ENCODE measurements at regions of chr2 and their contacts with region 1.

Region 1: GRCh38 chr2:54723131-54723995 is at the start of gene EML6:
- DNase-seq: peak; percentile 99
- H3K4me3 Mint-ChIP-seq: peak within 1 kb of the TSS; percentile 90
- H3K27ac Mint-ChIP-seq: no peak within 1 kb of the TSS
- H3K4me1 Mint-ChIP-seq: peaks cover 13% of the 10 kb centered on the region
- H3K27me3 Mint-ChIP-seq: peaks cover 32% of the 10 kb centered on the region
- total RNA-seq, gene EML6: 0.38 to 0.49 TPM

Region 2: GRCh38 chr2:54115284-54116137 is 607.9 kb before region 1 on chr2 and contains the start of gene ACYP2:
- CTCF ChIA-PET with region 1: no interaction called
- intact Hi-C with region 1: loop called (anchors 1 kb)
- DNase-seq: peak; percentile 95
- H3K4me3 Mint-ChIP-seq: peak within 1 kb of the TSS; percentile 97
- H3K27ac Mint-ChIP-seq: peak within 1 kb of the TSS; percentile 100
- H3K4me1 Mint-ChIP-seq: peaks cover 11% of the 10 kb centered on the region
- H3K27me3 Mint-ChIP-seq: no peaks in the 10 kb centered on the region
- total RNA-seq, gene ACYP2: 6.8 to 7.3 TPM

Region 3: DNA sequence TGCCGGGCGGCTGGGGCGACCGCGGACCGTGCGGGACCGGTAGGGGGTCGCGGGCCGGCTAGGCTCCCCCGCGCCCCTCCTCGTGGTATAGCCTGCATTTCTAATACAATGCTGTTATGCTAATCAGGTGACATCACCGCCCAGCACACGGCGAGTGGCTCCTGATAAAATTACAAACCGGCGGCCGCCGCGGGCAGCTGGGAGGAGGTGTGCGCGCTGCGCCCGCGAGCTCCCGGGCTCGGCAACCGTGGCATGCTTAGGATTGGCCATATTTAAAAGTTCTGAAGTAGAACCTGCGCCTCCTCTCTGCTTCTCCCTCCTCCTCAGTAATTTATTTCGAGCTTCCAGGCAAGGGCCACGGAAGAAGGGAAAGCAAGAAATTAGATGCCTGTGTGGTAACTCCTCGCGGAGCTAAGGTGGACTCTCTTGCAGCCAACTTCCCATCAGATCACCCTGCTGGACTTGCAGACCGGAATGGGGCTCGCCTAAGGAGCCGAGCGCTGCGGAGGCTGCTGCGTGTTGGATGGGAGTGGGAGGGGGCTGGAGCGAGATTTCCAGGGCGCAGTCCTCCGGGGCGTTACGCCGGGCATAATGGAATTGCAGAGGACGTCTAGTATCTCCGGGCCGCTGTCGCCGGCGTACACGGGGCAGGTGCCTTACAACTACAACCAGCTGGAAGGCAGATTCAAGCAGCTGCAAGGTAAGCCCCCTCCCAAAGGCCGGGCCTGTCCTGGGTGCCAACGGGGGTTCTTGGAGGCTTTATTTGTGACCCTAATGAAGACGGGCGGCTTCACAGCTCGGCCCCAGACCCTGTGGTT is 165.0 kb before region 1 on chr2:
- CTCF ChIA-PET with region 1: interaction called, 3 read pairs
- intact Hi-C with region 1: loop called (anchors 1 kb)
- DNase-seq: peak; percentile 83
- H3K4me3 Mint-ChIP-seq: peak overlapping the region; percentile 87
- H3K27ac Mint-ChIP-seq: peak overlapping the region; percentile 99
- H3K4me1 Mint-ChIP-seq: peaks cover 43% of the 10 kb centered on the region
- H3K27me3 Mint-ChIP-seq: no peaks in the 10 kb centered on the region

Region 4: DNA sequence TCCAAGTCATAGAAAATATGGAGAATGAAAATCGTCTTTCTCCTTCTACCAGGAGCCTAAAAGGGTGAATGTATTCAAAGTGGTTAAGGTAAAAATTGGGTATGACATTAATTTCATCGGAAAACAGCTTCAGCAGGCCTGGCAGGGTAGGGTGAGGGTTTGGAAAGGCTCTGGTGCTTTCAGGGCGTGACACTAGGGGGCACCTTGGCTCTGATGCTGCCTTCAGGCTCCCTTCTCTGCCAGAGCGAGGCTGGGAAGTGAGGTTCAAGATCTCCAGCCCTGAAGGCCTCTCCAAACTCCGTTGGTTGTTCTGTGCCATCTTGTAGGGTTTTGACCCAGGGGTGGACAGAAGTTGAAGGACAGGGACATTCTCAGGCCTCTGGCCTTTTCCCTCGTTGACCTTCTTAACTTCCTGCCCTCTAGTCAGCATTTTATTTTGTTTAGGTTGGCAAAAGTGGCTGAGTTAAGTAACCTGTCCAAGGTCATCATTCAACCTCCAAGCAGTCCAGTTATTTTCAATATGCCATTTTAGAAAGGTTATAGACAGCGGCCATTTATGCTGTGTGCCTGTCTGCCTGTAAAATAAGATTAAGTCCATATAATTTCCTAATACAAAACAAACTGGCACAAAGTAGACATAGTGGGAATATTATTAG is 40.4 kb after region 1 on chr2:
- CTCF ChIA-PET with region 1: no interaction called
- intact Hi-C with region 1: loop called (anchors 1 kb)
- DNase-seq: peak; percentile 53
- H3K4me3 Mint-ChIP-seq: no peak overlapping the region
- H3K27ac Mint-ChIP-seq: no peak overlapping the region
- H3K4me1 Mint-ChIP-seq: peaks cover 12% of the 10 kb centered on the region
- H3K27me3 Mint-ChIP-seq: no peaks in the 10 kb centered on the region

Region 5: DNA sequence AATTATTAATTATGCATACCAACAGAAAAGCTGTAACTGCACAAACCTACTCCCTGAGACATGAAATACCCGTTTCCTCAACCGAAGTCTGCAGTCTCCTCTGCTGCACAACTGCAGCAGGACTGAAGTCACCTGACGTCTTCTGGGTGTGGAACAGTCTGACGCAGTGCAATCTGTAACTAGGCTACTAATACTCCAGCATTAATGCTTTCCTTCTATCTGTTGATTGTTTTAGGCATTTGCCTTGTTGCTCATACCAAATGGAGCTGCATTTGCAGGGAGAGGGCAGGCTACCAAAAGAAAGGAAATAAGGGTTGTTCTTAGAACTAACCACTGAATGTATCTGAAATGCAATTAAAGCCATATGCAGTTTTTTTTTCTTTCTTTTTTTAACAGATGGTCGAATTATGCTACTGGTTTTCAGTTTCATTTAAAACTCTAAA is 286.8 kb after region 1 on chr2:
- CTCF ChIA-PET with region 1: no interaction called
- intact Hi-C with region 1: loop called (anchors 2 kb)
- DNase-seq: peak; percentile 54
- H3K4me3 Mint-ChIP-seq: peak overlapping the region; percentile 77
- H3K27ac Mint-ChIP-seq: peak overlapping the region; percentile 55
- H3K4me1 Mint-ChIP-seq: peaks cover 56% of the 10 kb centered on the region
- H3K27me3 Mint-ChIP-seq: no peaks in the 10 kb centered on the region

Region 6: GRCh38 chr2:55232084-55232862 is 508.9 kb after region 1 on chr2 and contains the starts of genes CLHC1 and RPS27A:
- CTCF ChIA-PET with region 1: no interaction called
- intact Hi-C with region 1: loop called (anchors 1 kb)
- DNase-seq: peak; percentile 94
- H3K4me3 Mint-ChIP-seq: peak within 1 kb of the TSS; percentile 97
- H3K27ac Mint-ChIP-seq: peak within 1 kb of the TSS; percentile 95
- H3K4me1 Mint-ChIP-seq: peaks cover 52% of the 10 kb centered on the region
- H3K27me3 Mint-ChIP-seq: no peaks in the 10 kb centered on the region
- total RNA-seq, gene CLHC1: 2.4 to 3.1 TPM
- total RNA-seq, gene RPS27A: 1,468 to 1,556 TPM